Caco-2 (cell line): ENCODE measurements at regions of chr6 and their contacts with region 1.

Region 1: GRCh38 chr6:161498359-161498758 is 224.5 kb upstream of the AGPAT4 start:
- DNase-seq: peak; percentile 61 to 64
- H3K4me3 ChIP-seq: no peak overlapping the region
- H3K4me3 Mint-ChIP-seq: no peak overlapping the region
- H3K27ac Mint-ChIP-seq: no peak overlapping the region
- H3K4me1 ChIP-seq: no peaks in the 10 kb centered on the region
- H3K4me1 Mint-ChIP-seq: no peaks in the 10 kb centered on the region
- H3K27me3 ChIP-seq: no peaks in the 10 kb centered on the region
- H3K27me3 Mint-ChIP-seq: peaks cover 18% of the 10 kb centered on the region
- CTCF ChIP-seq: peak; percentile 72 to 73

Region 2: GRCh38 chr6:161393839-161394364 is 104.5 kb before region 1 on chr6:
- CTCF ChIA-PET with region 1: interaction called, 3 read pairs
- POLR2A ChIA-PET with region 1: no interaction called
- intact Hi-C with region 1: loop called (anchors 1 kb)
- DNase-seq: peak in 1 of 2 experiments; percentile 55
- H3K4me3 ChIP-seq: no peak overlapping the region
- H3K4me3 Mint-ChIP-seq: no peak overlapping the region
- H3K27ac Mint-ChIP-seq: no peak overlapping the region
- H3K4me1 ChIP-seq: no peaks in the 10 kb centered on the region
- H3K4me1 Mint-ChIP-seq: no peaks in the 10 kb centered on the region
- H3K27me3 ChIP-seq: no peaks in the 10 kb centered on the region
- H3K27me3 Mint-ChIP-seq: peaks cover 8% of the 10 kb centered on the region
- CTCF ChIP-seq: peak; percentile 50 to 67

Region 3: GRCh38 chr6:161429921-161430490 is 68.4 kb before region 1 on chr6:
- CTCF ChIA-PET with region 1: interaction called, 3 read pairs
- POLR2A ChIA-PET with region 1: no interaction called
- intact Hi-C with region 1: loop called (anchors 1 kb)
- DNase-seq: peak in 1 of 2 experiments; percentile 13
- H3K4me3 ChIP-seq: no peak overlapping the region
- H3K4me3 Mint-ChIP-seq: no peak overlapping the region
- H3K27ac Mint-ChIP-seq: no peak overlapping the region
- H3K4me1 ChIP-seq: peaks cover 12% of the 10 kb centered on the region
- H3K4me1 Mint-ChIP-seq: peaks cover 7% of the 10 kb centered on the region
- H3K27me3 ChIP-seq: no peaks in the 10 kb centered on the region
- H3K27me3 Mint-ChIP-seq: no peaks in the 10 kb centered on the region
- CTCF ChIP-seq: peak; percentile 26 to 27

Region 4: DNA sequence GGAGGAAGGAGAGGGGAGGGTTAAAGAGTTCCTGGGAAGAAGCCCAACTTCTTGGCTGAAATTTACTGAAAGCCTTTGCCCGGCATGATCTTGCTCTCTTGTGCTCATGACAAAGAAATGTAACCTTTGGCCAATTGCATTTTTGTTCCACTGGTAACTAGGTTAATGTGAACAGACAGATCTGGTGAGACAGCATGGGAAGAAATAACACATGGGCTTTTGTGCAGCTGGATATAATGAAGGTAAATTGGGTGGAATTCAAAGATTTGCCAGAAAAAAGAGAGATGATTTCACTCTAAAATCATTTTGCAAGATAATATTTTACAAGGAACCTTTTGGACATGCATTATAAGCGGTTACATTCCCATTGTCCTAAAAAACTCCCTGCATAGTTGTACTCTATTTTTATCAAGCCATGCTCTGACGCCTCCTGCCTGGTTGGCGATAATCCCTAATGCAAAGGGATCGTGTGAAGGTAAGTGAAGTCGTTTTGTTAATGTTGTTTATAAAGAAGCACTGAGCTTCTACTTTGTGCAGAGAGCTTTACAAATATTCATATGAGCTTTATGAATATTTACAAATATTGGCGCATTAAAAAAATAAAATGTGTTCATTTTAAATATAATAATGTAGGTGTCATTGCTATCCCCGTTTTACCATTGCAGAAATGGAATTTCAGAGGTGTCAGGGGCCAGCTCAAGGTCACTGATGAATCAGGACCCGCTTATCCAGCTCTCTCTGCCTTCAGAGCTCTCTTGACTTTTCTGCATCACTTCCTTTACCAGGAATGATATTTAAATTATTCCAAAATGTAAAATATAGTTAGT is 63.2 kb before region 1 on chr6:
- CTCF ChIA-PET with region 1: no interaction called
- POLR2A ChIA-PET with region 1: no interaction called
- intact Hi-C with region 1: loop called (anchors 1 kb)
- DNase-seq: peak; percentile 54 to 70
- H3K4me3 ChIP-seq: no peak overlapping the region
- H3K4me3 Mint-ChIP-seq: peak overlapping the region; percentile 71
- H3K27ac Mint-ChIP-seq: peak overlapping the region; percentile 92
- H3K4me1 ChIP-seq: peaks cover 17% of the 10 kb centered on the region
- H3K4me1 Mint-ChIP-seq: peaks cover 11% of the 10 kb centered on the region
- H3K27me3 ChIP-seq: no peaks in the 10 kb centered on the region
- H3K27me3 Mint-ChIP-seq: no peaks in the 10 kb centered on the region
- CTCF ChIP-seq: no peak

Region 5: GRCh38 chr6:161584051-161584450 is 85.7 kb after region 1 on chr6:
- CTCF ChIA-PET with region 1: no interaction called
- POLR2A ChIA-PET with region 1: no interaction called
- intact Hi-C with region 1: no loop called
- DNase-seq: no peak
- H3K4me3 ChIP-seq: no peak overlapping the region
- H3K4me3 Mint-ChIP-seq: no peak overlapping the region
- H3K27ac Mint-ChIP-seq: no peak overlapping the region
- H3K4me1 ChIP-seq: no peaks in the 10 kb centered on the region
- H3K4me1 Mint-ChIP-seq: no peaks in the 10 kb centered on the region
- H3K27me3 ChIP-seq: no peaks in the 10 kb centered on the region
- H3K27me3 Mint-ChIP-seq: peaks cover 2% of the 10 kb centered on the region
- CTCF ChIP-seq: no peak

Region 6: GRCh38 chr6:161684731-161685475 is 186.5 kb after region 1 on chr6:
- CTCF ChIA-PET with region 1: no interaction called
- POLR2A ChIA-PET with region 1: no interaction called
- intact Hi-C with region 1: no loop called
- DNase-seq: no peak
- H3K4me3 ChIP-seq: no peak overlapping the region
- H3K4me3 Mint-ChIP-seq: no peak overlapping the region
- H3K27ac Mint-ChIP-seq: no peak overlapping the region
- H3K4me1 ChIP-seq: no peaks in the 10 kb centered on the region
- H3K4me1 Mint-ChIP-seq: no peaks in the 10 kb centered on the region
- H3K27me3 ChIP-seq: no peaks in the 10 kb centered on the region
- H3K27me3 Mint-ChIP-seq: peaks cover 12% of the 10 kb centered on the region
- CTCF ChIP-seq: no peak